ENCODE measurements at regions of chr6 and their contacts with region 1.

Region 1: DNA sequence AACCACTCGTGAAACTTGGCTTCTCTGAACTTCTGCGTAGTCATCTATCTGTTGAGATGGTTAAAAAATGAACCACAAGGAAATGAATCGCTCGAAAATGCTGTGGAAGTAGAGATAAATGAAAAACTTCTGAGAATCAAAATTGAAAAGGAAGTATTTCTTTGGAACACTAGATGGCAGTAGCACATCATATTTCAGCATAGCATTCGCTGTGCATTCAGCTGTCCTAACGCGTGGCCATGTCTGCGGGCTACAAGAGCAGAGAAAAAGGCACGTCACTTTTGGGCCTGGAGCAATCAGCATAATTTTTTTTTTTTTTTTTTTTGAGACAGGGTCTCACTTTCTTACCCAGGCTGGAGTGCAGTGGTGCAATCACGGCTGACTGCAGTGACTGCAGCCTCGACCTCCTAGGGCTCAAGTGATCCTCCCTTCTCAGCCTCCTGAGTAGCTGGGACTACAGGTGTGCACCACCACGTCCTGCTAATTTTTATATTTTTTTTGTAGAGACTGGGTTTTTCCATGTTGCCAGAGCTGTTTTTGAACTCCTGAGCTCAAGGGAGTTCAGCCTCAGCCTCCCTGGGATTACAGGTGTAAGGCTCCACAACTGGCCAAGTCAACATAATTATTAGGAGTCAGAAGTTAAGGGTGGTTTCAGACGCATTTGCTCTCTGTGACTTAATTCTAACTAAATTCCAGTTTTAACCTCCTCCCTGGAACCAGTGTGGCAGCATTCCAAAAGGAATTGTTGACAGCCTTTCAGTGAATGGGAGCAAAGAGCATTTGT is 8.8 kb upstream of the PERP start:
- DNase-seq: peak; percentile 68
- ATAC-seq: peak; percentile 83

Region 2: GRCh38 chr6:138278326-138278725 is 162.3 kb after region 1 on chr6:
- intact Hi-C with region 1: loop called (anchors 5 kb)
- DNase-seq: no peak
- ATAC-seq: peak; percentile 60

Region 3: GRCh38 chr6:138517635-138518034 is 401.6 kb after region 1 on chr6:
- intact Hi-C with region 1: loop called (anchors 10 kb)
- DNase-seq: peak; percentile 73
- ATAC-seq: no peak

Measured in Right ventricle myocardium inferior (tissue), 1 donor.